Activated CD4-positive, alpha-beta T cell treated with anti-CD3 and anti-CD28 coated beads for 36 hours (primary cell): ENCODE measurements at regions of chr7 and their contacts with region 1.

Region 1: GRCh38 chr7:158856883-158857668 is 718 bp downstream of the DYNC2I1 start:
- DNase-seq: no peak
- ATAC-seq: no peak
- H3K4me3 Mint-ChIP-seq: peak overlapping the region; percentile 92
- H3K27ac Mint-ChIP-seq: no peak overlapping the region
- H3K4me1 Mint-ChIP-seq: peaks cover 26% of the 10 kb centered on the region
- H3K27me3 Mint-ChIP-seq: no peaks in the 10 kb centered on the region

Region 2: DNA sequence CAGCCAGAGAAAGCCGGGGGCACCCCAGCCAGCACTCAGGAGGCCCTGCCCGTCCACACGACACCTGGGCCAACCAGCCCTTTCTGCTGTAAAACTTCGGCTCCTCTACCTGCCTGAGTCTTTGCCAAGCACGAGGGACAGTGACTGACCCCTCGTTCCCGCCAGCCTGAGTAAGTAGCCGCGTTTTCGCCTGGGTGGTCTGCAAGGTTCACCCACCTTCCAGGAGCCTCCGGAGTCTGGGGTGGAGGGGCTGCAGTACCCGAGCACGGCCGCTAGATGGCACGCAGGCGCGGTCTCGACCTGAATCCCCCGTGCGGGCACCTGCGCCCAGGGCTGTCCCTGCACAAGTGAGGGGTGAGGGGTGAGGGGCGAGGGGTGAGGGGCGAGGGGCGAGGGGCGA is 462.1 kb before region 1 on chr7:
- CTCF ChIA-PET with region 1: no interaction called
- POLR2A ChIA-PET with region 1: no interaction called
- intact Hi-C with region 1: no loop called
- DNase-seq: peak; percentile 67
- ATAC-seq: peak; percentile 30
- H3K4me3 Mint-ChIP-seq: no peak overlapping the region
- H3K27ac Mint-ChIP-seq: no peak overlapping the region
- H3K4me1 Mint-ChIP-seq: no peaks in the 10 kb centered on the region
- H3K27me3 Mint-ChIP-seq: no peaks in the 10 kb centered on the region

Region 3: DNA sequence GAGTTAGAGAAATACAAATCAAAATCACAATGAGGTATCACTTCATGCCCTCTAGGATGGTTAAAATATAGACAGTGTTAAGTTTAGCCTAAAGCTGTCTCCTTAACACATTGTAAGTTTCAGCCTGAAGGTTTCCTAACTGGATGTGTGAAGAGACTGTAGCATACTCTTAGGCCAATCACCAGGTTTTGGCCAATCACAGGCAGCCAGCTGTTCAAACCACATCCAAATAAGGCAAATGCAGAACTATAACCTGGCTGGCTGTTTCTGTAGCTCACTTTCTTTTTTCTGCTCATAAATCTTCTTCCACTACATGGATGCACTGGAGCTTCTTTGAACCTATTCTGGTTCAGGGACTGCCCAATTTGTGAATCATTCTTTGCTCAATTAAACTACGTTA is 47.5 kb before region 1 on chr7:
- CTCF ChIA-PET with region 1: interaction called, 3 read pairs
- POLR2A ChIA-PET with region 1: interaction called, 3 read pairs
- intact Hi-C with region 1: loop called in 1 of 2 experiments (anchors 1 kb)
- DNase-seq: peak; percentile 53
- ATAC-seq: peak; percentile 33
- H3K4me3 Mint-ChIP-seq: peak overlapping the region; percentile 40
- H3K27ac Mint-ChIP-seq: peak overlapping the region; percentile 96
- H3K4me1 Mint-ChIP-seq: peaks cover 67% of the 10 kb centered on the region
- H3K27me3 Mint-ChIP-seq: no peaks in the 10 kb centered on the region

Region 4: GRCh38 chr7:158818325-158819213 is 38.5 kb before region 1 on chr7:
- CTCF ChIA-PET with region 1: interaction called, 4 read pairs
- POLR2A ChIA-PET with region 1: interaction called, 3 read pairs
- intact Hi-C with region 1: loop called in 1 of 2 experiments (anchors 2 kb)
- DNase-seq: peak; percentile 85
- ATAC-seq: peak; percentile 74
- H3K4me3 Mint-ChIP-seq: peak overlapping the region; percentile 73
- H3K27ac Mint-ChIP-seq: peak overlapping the region; percentile 93
- H3K4me1 Mint-ChIP-seq: peaks cover 87% of the 10 kb centered on the region
- H3K27me3 Mint-ChIP-seq: no peaks in the 10 kb centered on the region

Region 5: DNA sequence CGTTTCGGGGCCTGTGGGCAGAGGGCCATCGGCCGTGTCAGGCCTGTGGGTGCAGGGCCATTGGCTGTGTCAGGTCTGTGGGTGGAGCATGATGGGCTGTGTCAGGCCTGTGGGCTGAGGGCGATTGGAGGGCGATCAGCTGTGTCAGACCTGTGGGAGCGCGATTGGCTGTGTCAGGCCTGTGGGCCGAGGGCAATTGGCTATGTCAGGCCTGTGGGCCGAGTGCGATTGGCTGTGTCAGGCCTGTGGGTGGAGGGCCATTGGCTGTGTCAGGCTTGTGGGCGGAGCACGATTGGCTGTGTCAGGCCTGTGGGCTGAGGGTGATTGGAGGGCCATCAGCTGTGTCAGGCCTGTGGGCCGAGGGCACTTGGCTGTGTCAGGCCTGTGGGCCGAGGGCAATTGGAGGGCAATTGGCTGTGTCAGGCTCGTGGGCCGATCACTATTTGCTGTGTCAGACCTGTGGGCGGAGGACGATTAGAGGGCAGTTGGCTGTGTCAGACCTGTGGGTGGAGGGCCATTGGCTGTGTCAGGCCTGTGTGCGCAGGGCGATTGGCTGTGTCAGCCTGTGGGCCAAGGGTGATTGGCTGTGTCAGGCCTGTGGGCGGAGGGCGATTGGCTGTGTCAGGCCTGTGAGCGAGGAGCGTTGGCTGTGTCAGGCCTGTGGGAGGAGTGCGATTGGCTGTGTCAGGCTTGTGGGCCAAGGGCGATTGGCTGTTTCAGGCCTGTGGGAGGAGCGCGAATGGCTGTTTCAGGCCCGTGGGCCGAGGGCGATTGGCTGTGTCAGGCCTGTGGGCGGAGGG is 53.4 kb after region 1 on chr7:
- CTCF ChIA-PET with region 1: no interaction called
- POLR2A ChIA-PET with region 1: no interaction called
- intact Hi-C with region 1: no loop called
- DNase-seq: no peak
- ATAC-seq: peak; percentile 23
- H3K4me3 Mint-ChIP-seq: no peak overlapping the region
- H3K27ac Mint-ChIP-seq: no peak overlapping the region
- H3K4me1 Mint-ChIP-seq: no peaks in the 10 kb centered on the region
- H3K27me3 Mint-ChIP-seq: no peaks in the 10 kb centered on the region

Region 6: GRCh38 chr7:159084069-159084801 is 227.2 kb after region 1 on chr7:
- CTCF ChIA-PET with region 1: no interaction called
- POLR2A ChIA-PET with region 1: no interaction called
- intact Hi-C with region 1: no loop called
- DNase-seq: no peak
- ATAC-seq: no peak
- H3K4me3 Mint-ChIP-seq: no peak overlapping the region
- H3K27ac Mint-ChIP-seq: peak overlapping the region; percentile 17
- H3K4me1 Mint-ChIP-seq: peaks cover 4% of the 10 kb centered on the region
- H3K27me3 Mint-ChIP-seq: peaks cover 3% of the 10 kb centered on the region

Region 7: GRCh38 chr7:159105845-159106614 is 249.0 kb after region 1 on chr7:
- CTCF ChIA-PET with region 1: no interaction called
- POLR2A ChIA-PET with region 1: no interaction called
- intact Hi-C with region 1: no loop called
- DNase-seq: no peak
- ATAC-seq: peak; percentile 55
- H3K4me3 Mint-ChIP-seq: no peak overlapping the region
- H3K27ac Mint-ChIP-seq: no peak overlapping the region
- H3K4me1 Mint-ChIP-seq: peaks cover 3% of the 10 kb centered on the region
- H3K27me3 Mint-ChIP-seq: no peaks in the 10 kb centered on the region